HEK293 (cell line): ENCODE measurements at regions of chr6 and their contacts with region 1.

Region 1: DNA sequence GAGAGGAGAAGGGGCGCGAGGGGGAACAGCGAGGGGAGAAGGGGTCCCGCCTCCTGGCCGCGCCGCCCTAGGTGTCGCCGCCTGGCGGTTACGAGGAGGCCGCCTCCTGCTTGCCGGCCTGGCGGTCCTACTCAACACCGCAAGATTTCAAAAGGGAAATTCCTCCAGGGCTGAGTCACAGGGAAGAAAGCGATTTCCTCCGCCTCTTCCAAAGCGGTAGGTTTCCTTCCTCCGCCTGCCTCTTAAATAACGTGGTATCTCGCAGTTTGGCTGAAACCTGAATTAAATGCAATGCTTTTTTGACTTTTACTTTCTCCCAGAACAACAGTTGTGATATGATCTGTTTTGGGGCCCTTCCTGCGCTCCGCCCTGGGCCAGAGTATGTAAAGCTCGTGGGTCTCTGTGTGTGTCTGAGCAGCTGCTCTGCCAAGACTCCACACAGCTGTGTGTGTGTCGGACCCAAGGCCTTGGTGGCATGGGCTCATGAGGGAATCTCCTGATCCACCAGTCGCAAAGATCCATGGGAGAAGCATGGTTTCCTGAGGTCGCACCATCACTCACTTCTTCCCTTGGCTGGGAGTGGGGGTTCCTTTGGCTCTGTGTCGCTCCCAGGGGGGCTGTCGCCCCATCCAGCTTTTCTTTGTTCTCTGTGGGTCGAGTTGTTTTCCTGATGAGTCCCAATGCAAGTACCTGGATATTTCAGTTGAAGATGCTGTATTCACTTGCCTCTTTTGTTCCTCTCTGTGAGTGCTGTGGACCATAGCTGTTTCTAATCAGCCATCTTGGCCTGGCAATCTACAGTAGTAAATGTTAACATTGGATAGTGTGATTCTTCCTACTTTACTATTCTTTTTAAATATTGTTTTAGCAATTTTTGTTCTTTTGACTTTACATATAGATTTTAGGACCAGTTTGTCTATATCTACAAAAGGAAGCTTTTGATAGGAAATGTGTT is 31.6 kb upstream of the NOTCH4 start:
- H3K4me3 ChIP-seq: peak overlapping the region; percentile 25
- H3K27ac ChIP-seq: 0 out of 2 replicates have a peak overlapping the region, but pooled peaks have one; percentile 30
- H3K4me1 ChIP-seq: no peaks in the 10 kb centered on the region
- CTCF ChIP-seq: no peak

Region 2: DNA sequence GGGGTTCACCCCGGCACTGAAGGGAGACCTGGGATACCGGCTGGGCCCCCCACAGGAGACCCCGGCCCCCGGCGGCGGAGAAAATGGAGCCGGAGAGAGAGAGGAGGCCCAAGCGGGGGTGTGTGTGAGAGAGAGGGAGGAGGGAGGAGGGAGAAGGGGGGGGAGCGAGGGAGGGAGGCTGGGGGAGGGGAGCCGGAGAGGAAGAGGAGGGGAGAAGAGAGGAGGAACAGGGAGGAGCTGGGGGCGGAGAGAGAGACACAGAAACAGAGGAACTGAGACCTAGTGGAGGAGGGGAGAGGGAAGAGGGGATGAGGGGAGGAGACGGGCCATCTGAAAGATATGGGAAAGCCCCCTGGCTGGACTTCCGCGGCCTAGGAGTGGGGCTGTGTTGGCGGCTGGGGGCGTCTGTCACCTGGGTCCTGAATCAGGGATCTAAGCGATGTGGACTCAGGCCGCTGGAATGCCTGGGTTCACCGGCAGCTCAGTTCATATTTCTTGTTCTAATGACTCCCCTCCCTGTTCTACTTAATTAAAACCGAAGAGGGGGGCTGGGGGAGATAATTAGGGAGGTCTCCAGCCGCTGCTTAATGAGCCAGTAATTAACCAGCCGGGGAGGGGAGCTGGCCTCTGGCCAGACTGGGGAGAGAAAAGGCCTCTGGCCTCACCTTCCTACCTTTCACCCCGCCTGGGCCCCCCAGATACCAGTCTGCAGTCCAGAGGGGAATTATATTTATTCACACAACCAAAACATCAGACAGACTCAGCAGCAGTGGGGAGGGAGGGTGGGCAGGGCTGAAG is 65.2 kb before region 1 on chr6 and contains the start of gene PBX2:
- CTCF ChIA-PET with region 1: interaction called, 11 read pairs
- POLR2A ChIA-PET with region 1: interaction called, 5 read pairs
- H3K4me3 ChIP-seq: peak within 1 kb of the TSS; percentile 62
- H3K27ac ChIP-seq: peak within 1 kb of the TSS; percentile 77
- H3K4me1 ChIP-seq: peaks cover 10% of the 10 kb centered on the region
- CTCF ChIP-seq: no peak; the same call in 1 of the 2 replicates

Region 3: GRCh38 chr6:32195652-32195901 is 59.9 kb before region 1 on chr6:
- CTCF ChIA-PET with region 1: interaction called, 11 read pairs
- POLR2A ChIA-PET with region 1: no interaction called
- H3K4me3 ChIP-seq: peak overlapping the region; percentile 72
- H3K27ac ChIP-seq: peak overlapping the region; percentile 97
- H3K4me1 ChIP-seq: peaks cover 4% of the 10 kb centered on the region
- CTCF ChIP-seq: peak; percentile 85

Region 4: GRCh38 chr6:32529697-32530429 is 274.4 kb after region 1 on chr6 and contains the start of gene HLA-DRB5:
- CTCF ChIA-PET with region 1: interaction called, 10 read pairs
- POLR2A ChIA-PET with region 1: no interaction called
- H3K4me3 ChIP-seq: no peak within 1 kb of the TSS
- H3K27ac ChIP-seq: no peak within 1 kb of the TSS
- H3K4me1 ChIP-seq: no peaks in the 10 kb centered on the region
- CTCF ChIP-seq: no peak